CD8-positive, alpha-beta memory T cell (primary cell): ENCODE measurements at regions of chr15 and their contacts with region 1.

Region 1: DNA sequence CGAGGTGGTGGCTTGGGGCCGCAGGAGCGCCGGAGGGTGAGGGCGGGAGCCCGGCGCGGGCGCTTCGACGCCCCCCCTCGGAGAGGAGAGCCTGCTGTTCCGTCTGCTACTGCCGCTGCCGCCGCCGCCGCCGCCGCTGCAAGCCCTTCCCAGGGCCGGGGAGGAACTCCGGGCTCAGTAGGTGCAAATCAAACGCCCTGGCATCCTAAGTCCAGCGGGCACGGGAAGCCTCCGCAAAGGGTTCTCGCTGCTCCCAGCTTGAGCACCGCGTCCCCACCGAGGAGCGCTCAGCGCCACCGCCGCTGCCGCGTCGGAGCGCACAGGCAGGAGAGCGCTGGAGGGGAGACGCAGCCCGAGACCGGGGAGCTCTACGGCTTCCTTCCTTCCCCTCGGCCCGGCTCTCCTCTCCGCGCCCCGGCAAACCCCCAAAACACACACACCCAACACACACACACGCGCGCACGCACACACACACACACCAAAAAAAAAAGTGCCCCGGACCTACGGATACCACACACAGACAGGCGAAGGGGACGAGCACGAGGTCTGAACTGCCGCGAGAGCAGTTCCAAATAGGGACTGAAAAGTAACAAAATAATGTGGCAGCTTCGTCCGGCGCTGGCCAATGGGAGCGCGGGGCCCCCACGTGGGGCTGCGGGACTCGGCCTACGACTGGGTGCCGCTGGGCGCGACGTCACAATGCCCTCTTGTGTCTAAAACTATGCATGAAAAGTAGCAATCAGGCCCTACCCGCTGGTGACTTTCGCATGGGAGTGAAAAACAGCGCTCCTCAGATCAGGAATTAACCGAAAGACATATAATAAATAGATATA is at the start of gene TLE3:
- DNase-seq: peak; percentile 94 to 99 (median 97)
- H3K4me3 ChIP-seq: peak within 1 kb of the TSS; percentile 86
- H3K4me3 Mint-ChIP-seq: peak within 1 kb of the TSS; percentile 95 to 100 (median 98)
- H3K27ac ChIP-seq: peak within 1 kb of the TSS; percentile 85
- H3K27ac Mint-ChIP-seq: peak within 1 kb of the TSS; percentile 90 to 100 (median 98)
- H3K4me1 ChIP-seq: peaks cover 62% of the 10 kb centered on the region
- H3K4me1 Mint-ChIP-seq: peaks cover 48 to 64% (median 54%) of the 10 kb centered on the region in 3 donors
- H3K27me3 ChIP-seq: no peaks in the 10 kb centered on the region
- H3K27me3 Mint-ChIP-seq: peaks cover 4 to 21% of the 10 kb centered on the region in 2 donors
- total RNA-seq, gene TLE3: 73.1 to 76.5 TPM

Region 2: GRCh38 chr15:69713726-69714559 is 383.6 kb before region 1 on chr15:
- CTCF ChIA-PET with region 1: interaction called, 5 read pairs
- POLR2A ChIA-PET with region 1: interaction called, 12 read pairs
- DNase-seq: peak; percentile 54 to 91 (median 72)
- H3K4me3 ChIP-seq: no peak overlapping the region
- H3K4me3 Mint-ChIP-seq: peak overlapping the region; percentile 17 to 70 (median 55)
- H3K27ac ChIP-seq: peak overlapping the region; percentile 34
- H3K27ac Mint-ChIP-seq: peak overlapping the region; percentile 86 to 96 (median 93)
- H3K4me1 ChIP-seq: peaks cover 55% of the 10 kb centered on the region
- H3K4me1 Mint-ChIP-seq: peaks cover 82 to 91% (median 85%) of the 10 kb centered on the region in 3 donors
- H3K27me3 ChIP-seq: no peaks in the 10 kb centered on the region
- H3K27me3 Mint-ChIP-seq: no peaks in the 10 kb centered on the region

Region 3: DNA sequence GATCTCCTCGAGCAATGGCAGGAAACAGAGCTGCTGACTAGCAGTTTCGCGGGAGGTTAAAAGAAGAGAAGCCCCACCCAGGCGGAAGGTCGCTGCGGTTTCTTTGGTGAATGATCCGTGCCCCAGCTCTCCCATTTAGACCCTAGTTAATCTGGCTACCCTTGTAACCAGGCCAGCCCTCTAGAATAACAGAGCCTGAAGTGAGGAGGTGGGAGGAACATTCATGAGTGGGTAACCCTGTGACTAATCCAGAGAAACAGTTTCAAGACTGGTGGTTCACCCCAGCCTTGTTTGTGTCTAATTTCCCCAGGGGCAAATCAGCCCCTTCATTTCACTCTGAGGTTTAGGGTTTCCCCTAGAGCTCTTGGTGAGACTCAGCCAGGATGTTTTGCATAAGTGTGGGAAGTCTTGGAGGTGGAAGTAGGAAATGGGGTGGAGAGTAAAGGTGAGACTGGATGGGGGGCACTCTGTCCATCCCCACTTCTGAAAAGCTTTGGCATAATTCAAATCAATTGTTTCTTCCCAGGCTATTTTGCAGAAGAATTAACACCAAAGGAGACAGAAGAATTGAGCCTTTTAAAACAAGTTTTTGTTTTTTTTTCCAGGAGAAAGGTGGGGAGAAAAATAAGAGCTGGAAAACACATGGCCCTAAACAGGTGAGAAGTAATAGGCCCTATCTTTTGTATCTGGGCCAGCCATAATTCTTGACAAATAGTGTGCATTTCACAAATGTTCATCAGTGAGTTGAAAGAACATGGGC is 341.8 kb before region 1 on chr15:
- CTCF ChIA-PET with region 1: interaction called, 3 read pairs
- POLR2A ChIA-PET with region 1: interaction called, 11 read pairs
- DNase-seq: peak; percentile 48 to 84 (median 67)
- H3K4me3 ChIP-seq: peak overlapping the region; percentile 42
- H3K4me3 Mint-ChIP-seq: peak overlapping the region; percentile 47 to 81 (median 74)
- H3K27ac ChIP-seq: peak overlapping the region; percentile 11
- H3K27ac Mint-ChIP-seq: peak overlapping the region; percentile 80 to 92 (median 86)
- H3K4me1 ChIP-seq: peaks cover 74% of the 10 kb centered on the region
- H3K4me1 Mint-ChIP-seq: peaks cover 78 to 98% (median 97%) of the 10 kb centered on the region in 3 donors
- H3K27me3 ChIP-seq: no peaks in the 10 kb centered on the region
- H3K27me3 Mint-ChIP-seq: peaks cover 0 to 14% of the 10 kb centered on the region in 2 donors

Region 4: GRCh38 chr15:69823218-69823907 is 274.2 kb before region 1 on chr15:
- CTCF ChIA-PET with region 1: no interaction called
- POLR2A ChIA-PET with region 1: no interaction called
- DNase-seq: no peak
- H3K4me3 ChIP-seq: no peak overlapping the region
- H3K4me3 Mint-ChIP-seq: no peak overlapping the region
- H3K27ac ChIP-seq: no peak overlapping the region
- H3K27ac Mint-ChIP-seq: no peak overlapping the region
- H3K4me1 ChIP-seq: no peaks in the 10 kb centered on the region
- H3K4me1 Mint-ChIP-seq: no peaks in the 10 kb centered on the region
- H3K27me3 ChIP-seq: peaks cover 2% of the 10 kb centered on the region
- H3K27me3 Mint-ChIP-seq: peaks cover 8 to 16% of the 10 kb centered on the region in 2 donors

Region 5: GRCh38 chr15:70023064-70023768 is 74.3 kb before region 1 on chr15:
- CTCF ChIA-PET with region 1: interaction called, 6 read pairs
- POLR2A ChIA-PET with region 1: interaction called, 20 read pairs
- DNase-seq: peak; percentile 45 to 89 (median 66)
- H3K4me3 ChIP-seq: peak overlapping the region; percentile 4
- H3K4me3 Mint-ChIP-seq: peak overlapping the region in 3 of 7 donors; percentile 65 to 74 (median 73)
- H3K27ac ChIP-seq: no peak overlapping the region
- H3K27ac Mint-ChIP-seq: peak overlapping the region; percentile 15 to 95 (median 88)
- H3K4me1 ChIP-seq: peaks cover 17% of the 10 kb centered on the region
- H3K4me1 Mint-ChIP-seq: peaks cover 16 to 27% (median 20%) of the 10 kb centered on the region in 3 donors
- H3K27me3 ChIP-seq: no peaks in the 10 kb centered on the region
- H3K27me3 Mint-ChIP-seq: peaks cover 0 to 8% of the 10 kb centered on the region in 2 donors

Region 6: GRCh38 chr15:70153981-70154717 is 56.6 kb after region 1 on chr15:
- CTCF ChIA-PET with region 1: no interaction called
- POLR2A ChIA-PET with region 1: interaction called, 13 read pairs
- DNase-seq: no peak
- H3K4me3 ChIP-seq: no peak overlapping the region
- H3K4me3 Mint-ChIP-seq: no peak overlapping the region
- H3K27ac ChIP-seq: no peak overlapping the region
- H3K27ac Mint-ChIP-seq: no peak overlapping the region
- H3K4me1 ChIP-seq: no peaks in the 10 kb centered on the region
- H3K4me1 Mint-ChIP-seq: peaks cover 0 to 5% (median 3%) of the 10 kb centered on the region in 3 donors
- H3K27me3 ChIP-seq: no peaks in the 10 kb centered on the region
- H3K27me3 Mint-ChIP-seq: peaks cover 0 to 12% of the 10 kb centered on the region in 2 donors

Region 7: DNA sequence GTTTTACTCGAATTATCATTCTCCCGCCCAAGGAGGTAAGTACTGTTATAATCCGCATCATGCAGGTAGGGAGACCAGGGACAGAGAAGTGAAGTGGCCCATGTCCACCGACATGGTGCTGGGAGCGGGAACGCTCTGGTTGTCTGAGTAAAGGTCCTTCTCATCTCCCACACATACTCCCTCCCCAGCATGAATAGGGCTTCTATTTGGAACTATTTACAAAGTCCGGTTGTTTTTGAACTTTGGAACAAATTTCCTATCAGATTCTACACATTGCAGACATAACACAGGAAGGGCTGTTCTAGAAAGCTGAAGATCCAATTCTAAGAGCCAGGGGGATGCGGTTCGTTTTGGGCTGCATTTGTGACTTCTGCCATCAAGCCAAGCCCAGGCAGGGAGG is 94.9 kb after region 1 on chr15:
- CTCF ChIA-PET with region 1: no interaction called
- POLR2A ChIA-PET with region 1: no interaction called
- DNase-seq: no peak
- H3K4me3 ChIP-seq: no peak overlapping the region
- H3K4me3 Mint-ChIP-seq: no peak overlapping the region
- H3K27ac ChIP-seq: no peak overlapping the region
- H3K27ac Mint-ChIP-seq: no peak overlapping the region
- H3K4me1 ChIP-seq: no peaks in the 10 kb centered on the region
- H3K4me1 Mint-ChIP-seq: peaks cover 1 to 7% (median 7%) of the 10 kb centered on the region in 3 donors
- H3K27me3 ChIP-seq: no peaks in the 10 kb centered on the region
- H3K27me3 Mint-ChIP-seq: peaks cover under 1 to 10% of the 10 kb centered on the region in 2 donors

Region 8: DNA sequence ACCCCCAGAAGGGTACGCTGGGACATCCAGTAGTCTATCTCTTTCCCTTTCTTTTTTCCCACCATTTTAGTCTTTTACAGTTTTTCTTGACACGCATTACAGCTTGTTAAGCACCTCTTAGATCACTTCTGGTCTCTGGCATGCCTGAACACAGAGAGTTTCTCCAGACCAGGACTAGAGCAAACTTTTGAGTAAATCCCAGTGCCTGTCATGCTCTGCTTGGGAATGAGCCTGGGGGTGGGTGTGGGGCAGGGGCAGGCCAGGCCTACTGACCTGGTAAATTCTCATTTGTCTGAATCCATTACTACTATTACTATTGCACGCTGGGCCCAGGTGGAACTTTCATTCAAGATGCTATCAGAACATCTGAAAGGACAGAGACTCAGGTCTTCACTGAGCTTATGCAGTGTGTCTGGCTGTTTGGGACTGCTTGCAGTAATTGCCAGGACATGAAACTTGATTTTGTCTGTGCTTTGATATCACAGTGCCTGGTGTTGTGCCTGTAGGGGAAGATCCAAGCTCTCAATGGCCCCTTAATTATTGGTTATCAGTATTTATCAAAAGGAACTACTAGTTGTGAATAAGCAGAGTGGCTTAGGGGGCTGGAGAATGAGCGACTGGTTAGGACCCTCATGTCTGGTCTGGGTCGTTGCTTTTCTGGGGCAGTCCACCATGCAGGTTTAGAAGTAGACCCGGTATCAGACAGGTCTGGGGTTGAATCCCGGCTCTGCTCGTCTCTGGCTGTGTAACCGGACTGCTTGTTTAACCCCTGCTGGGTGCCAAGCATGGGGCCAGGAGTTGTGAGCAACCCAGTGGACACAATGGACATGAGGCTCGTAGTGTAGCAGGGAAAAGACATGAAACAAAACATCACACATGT is 196.3 kb after region 1 on chr15:
- CTCF ChIA-PET with region 1: no interaction called
- POLR2A ChIA-PET with region 1: no interaction called
- DNase-seq: no peak
- H3K4me3 ChIP-seq: no peak overlapping the region
- H3K4me3 Mint-ChIP-seq: no peak overlapping the region
- H3K27ac ChIP-seq: no peak overlapping the region
- H3K27ac Mint-ChIP-seq: no peak overlapping the region
- H3K4me1 ChIP-seq: no peaks in the 10 kb centered on the region
- H3K4me1 Mint-ChIP-seq: peaks cover 3 to 14% (median 9%) of the 10 kb centered on the region in 3 donors
- H3K27me3 ChIP-seq: no peaks in the 10 kb centered on the region
- H3K27me3 Mint-ChIP-seq: peaks cover 0 to 4% of the 10 kb centered on the region in 2 donors